Breast epithelium (tissue), 4 donors: ENCODE measurements at regions of chr13 and their contacts with region 1.

Region 1: DNA sequence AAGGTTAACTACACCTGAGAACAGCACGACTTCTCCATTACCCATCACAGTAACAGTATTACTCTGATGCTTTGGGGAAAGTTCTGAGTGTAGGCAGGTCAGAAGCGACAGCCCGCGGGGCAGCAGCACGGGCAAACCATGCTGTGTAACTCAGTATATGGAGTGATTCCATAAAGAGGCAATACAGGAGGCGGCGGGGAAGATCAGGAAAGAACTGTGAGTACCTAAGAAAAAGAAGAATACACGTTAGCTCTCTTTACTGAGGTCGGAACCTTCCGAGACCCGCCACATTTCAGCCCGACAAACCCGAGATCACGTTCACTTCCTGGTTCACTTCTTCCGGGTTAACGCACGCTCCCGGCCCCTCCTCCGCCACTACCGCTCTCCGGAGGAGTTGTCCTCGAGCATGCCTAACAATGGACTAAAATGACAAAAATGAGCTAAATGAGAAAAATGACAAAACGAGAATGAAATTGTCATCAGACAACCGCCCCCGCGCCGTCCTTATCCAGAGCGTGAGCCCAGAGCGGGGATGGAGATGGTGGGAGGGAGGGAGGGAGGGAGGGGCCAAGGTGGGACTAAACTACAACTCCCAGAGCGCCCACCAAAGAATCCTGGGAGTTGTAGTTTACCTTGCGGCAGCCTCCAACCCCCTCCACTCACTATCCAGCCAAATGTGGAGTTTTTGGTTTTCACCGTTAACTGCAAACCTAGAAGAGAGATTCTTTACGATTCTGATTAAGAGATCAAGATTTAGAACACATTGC is at the start of gene MTRF1:
- DNase-seq: peak; percentile 63 to 67
- H3K4me3 ChIP-seq: peak within 1 kb of the TSS; percentile 46 to 82 (median 69)
- H3K27ac ChIP-seq: peak within 1 kb of the TSS; percentile 84 to 87
- H3K4me1 ChIP-seq: peaks cover 0 to 5% of the 10 kb centered on the region in 2 donors
- H3K27me3 ChIP-seq: no peaks in the 10 kb centered on the region
- CTCF ChIP-seq: no peak
- POLR2A ChIP-seq: no peak
- total RNA-seq, gene MTRF1: 10.4 to 18.6 (median 12.8) TPM

Region 2: GRCh38 chr13:41284512-41285288 is 21.3 kb after region 1 on chr13:
- intact Hi-C with region 1: loop called (anchors 2 kb)
- DNase-seq: no peak
- H3K4me3 ChIP-seq: no peak overlapping the region
- H3K27ac ChIP-seq: no peak overlapping the region
- H3K4me1 ChIP-seq: no peaks in the 10 kb centered on the region
- H3K27me3 ChIP-seq: no peaks in the 10 kb centered on the region
- CTCF ChIP-seq: no peak
- POLR2A ChIP-seq: no peak

Region 3: GRCh38 chr13:41310963-41311606 is 47.6 kb after region 1 on chr13 and contains the start of gene NAA16:
- intact Hi-C with region 1: loop called (anchors 2 kb)
- DNase-seq: peak; percentile 72 to 85
- H3K4me3 ChIP-seq: peak within 1 kb of the TSS; percentile 82 to 98 (median 84)
- H3K27ac ChIP-seq: peak within 1 kb of the TSS; percentile 95 to 96
- H3K4me1 ChIP-seq: peaks cover 0 to 8% of the 10 kb centered on the region in 2 donors
- H3K27me3 ChIP-seq: no peaks in the 10 kb centered on the region
- CTCF ChIP-seq: no peak
- POLR2A ChIP-seq: peak; percentile 44
- total RNA-seq, gene NAA16: 16.2 to 33.1 (median 22.0) TPM